ENCODE measurements at regions of chr20 and their contacts with region 1.

Region 1: DNA sequence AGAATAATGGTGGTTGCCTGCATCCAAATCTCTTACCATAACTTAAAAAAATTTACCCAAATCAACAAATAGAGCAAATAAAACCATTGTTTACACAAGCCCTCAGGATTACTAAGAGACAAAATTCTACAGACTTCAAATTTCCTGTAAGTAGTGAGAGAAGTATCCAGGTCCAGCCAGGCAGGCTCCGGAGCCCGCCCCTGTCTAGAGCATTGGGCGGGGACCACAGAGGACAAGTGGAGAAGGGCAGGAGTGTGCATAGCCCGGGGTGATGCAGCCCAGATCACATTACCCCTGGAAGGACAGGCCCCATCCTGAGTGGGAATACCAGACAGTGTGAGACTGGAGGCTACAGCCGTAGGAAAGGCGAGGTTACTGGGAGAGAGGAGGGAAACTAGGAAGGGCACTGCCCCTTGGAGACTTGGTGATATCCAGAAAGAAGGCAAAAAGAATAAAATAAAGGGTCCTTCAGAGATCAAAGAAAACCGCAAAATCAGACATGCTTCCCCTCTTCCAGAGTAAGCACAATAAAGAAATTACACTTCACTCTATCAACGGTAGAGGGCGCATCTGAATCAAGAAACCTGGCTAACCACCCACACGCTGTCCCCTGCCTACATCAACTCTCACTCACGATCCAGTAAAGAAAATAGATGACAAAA is 26.6 kb downstream of the RIN2 start:
- DNase-seq: peak; percentile 41 to 64
- ATAC-seq: peak; percentile 84 to 87
- H3K4me3 ChIP-seq: no peak overlapping the region
- H3K27ac ChIP-seq: peak overlapping the region; percentile 34 to 71 (median 62)
- H3K4me1 ChIP-seq: peaks cover 32 to 51% of the 10 kb centered on the region in 2 donors
- H3K27me3 ChIP-seq: no peaks in the 10 kb centered on the region
- CTCF ChIP-seq: peak; percentile 76 to 84 (median 80)
- POLR2A ChIP-seq: no peak

Region 2: GRCh38 chr20:19047661-19048296 is 736.9 kb before region 1 on chr20:
- in situ Hi-C with region 1: no loop called
- intact Hi-C with region 1: no loop called
- DNase-seq: peak in 1 of 2 donors; percentile 44
- ATAC-seq: peak in 1 of 2 donors; percentile 42
- H3K4me3 ChIP-seq: no peak overlapping the region
- H3K27ac ChIP-seq: no peak overlapping the region
- H3K4me1 ChIP-seq: peaks cover 6 to 15% of the 10 kb centered on the region in 2 donors
- H3K27me3 ChIP-seq: no peaks in the 10 kb centered on the region
- CTCF ChIP-seq: no peak
- POLR2A ChIP-seq: no peak

Region 3: DNA sequence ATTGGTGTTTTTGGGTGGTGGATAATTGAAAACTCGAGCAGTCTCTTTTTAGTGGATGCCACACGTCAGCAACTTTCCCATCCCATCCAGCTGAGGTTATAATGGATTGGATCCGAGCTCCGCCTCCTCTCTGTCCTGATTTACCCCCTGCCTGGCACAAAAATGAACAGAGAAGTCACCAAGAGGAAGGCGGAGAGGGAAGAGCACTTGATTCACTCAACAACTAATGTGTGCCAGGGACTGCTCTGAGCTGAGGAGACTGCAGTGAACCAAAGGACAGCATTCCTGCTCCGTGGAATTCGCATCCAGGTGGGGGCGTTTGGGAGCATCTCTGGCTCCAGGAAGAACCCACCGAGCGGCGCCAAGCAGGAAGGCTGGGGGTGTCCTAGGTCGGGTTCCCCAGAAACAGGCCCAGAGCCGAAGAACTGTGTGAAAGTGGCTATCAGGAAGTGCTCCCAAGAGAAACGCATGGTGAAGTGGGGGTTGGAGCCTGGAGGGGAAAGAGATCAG is 136.7 kb after region 1 on chr20:
- in situ Hi-C with region 1: no loop called
- intact Hi-C with region 1: loop called (anchors 5 kb)
- DNase-seq: peak; percentile 49 to 81
- ATAC-seq: peak; percentile 89 to 90
- H3K4me3 ChIP-seq: peak overlapping the region; percentile 18 to 42 (median 32)
- H3K27ac ChIP-seq: peak overlapping the region; percentile 73 to 87 (median 82)
- H3K4me1 ChIP-seq: peaks cover 56 to 67% of the 10 kb centered on the region in 2 donors
- H3K27me3 ChIP-seq: no peaks in the 10 kb centered on the region
- CTCF ChIP-seq: no peak
- POLR2A ChIP-seq: no peak

Region 4: DNA sequence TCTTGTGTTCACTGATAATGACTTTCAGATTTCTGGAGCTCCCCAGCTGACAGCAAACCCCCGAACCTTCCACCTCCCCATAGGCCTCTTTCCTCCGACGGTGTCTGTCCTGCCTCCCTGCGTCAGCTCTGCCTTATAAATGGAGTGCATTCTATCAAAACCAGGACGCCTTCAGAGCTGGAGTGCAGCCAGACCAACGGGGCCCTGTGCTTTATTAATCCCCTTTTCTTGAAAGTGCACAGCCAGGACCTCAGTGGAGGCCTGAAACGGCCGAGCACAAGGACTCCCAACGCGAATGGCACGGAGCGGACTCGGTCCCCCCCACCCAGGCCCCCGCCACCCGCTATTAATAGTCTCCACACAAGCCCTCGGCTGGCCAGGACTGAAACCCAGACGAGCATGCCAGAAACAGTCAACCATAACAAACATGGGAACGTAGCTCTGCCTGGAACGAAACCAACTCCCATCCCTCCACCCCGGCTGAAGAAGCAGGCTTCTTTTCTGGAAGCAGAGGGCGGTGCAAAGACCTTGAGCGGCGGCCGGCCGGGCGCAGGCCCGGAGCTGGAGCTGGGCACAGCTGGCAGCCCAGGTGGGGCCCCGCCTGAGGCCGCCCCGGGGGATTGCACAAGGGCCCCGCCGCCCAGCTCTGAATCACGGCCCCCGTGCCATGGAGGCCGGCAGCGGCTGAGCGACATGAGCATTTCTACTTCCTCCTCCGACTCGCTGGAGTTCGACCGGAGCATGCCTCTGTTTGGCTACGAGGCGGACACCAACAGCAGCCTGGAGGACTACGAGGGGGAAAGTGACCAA is 190.2 kb after region 1 on chr20:
- in situ Hi-C with region 1: loop called in 1 of 4 experiments (anchors 10 kb)
- intact Hi-C with region 1: loop called (anchors 1 kb)
- DNase-seq: peak; percentile 82 to 90
- ATAC-seq: peak; percentile 73 to 77
- H3K4me3 ChIP-seq: peak overlapping the region; percentile 54 to 65 (median 61)
- H3K27ac ChIP-seq: peak overlapping the region; percentile 86 to 95 (median 94)
- H3K4me1 ChIP-seq: peaks cover 62 to 63% of the 10 kb centered on the region in 2 donors
- H3K27me3 ChIP-seq: no peaks in the 10 kb centered on the region
- CTCF ChIP-seq: peak in 1 of 5 experiments; percentile 8
- POLR2A ChIP-seq: peak; percentile 19 to 62

Region 5: GRCh38 chr20:19981031-19981451 is 196.4 kb after region 1 on chr20:
- in situ Hi-C with region 1: loop called in 1 of 4 experiments (anchors 10 kb)
- intact Hi-C with region 1: no loop called
- DNase-seq: peak in 1 of 2 donors; percentile 42
- ATAC-seq: peak in 1 of 2 donors; percentile 50
- H3K4me3 ChIP-seq: no peak overlapping the region
- H3K27ac ChIP-seq: peak overlapping the region in 2 of 4 donors; percentile 21 to 43
- H3K4me1 ChIP-seq: peaks cover 81 to 89% of the 10 kb centered on the region in 2 donors
- H3K27me3 ChIP-seq: no peaks in the 10 kb centered on the region
- CTCF ChIP-seq: no peak
- POLR2A ChIP-seq: no peak

Region 6: DNA sequence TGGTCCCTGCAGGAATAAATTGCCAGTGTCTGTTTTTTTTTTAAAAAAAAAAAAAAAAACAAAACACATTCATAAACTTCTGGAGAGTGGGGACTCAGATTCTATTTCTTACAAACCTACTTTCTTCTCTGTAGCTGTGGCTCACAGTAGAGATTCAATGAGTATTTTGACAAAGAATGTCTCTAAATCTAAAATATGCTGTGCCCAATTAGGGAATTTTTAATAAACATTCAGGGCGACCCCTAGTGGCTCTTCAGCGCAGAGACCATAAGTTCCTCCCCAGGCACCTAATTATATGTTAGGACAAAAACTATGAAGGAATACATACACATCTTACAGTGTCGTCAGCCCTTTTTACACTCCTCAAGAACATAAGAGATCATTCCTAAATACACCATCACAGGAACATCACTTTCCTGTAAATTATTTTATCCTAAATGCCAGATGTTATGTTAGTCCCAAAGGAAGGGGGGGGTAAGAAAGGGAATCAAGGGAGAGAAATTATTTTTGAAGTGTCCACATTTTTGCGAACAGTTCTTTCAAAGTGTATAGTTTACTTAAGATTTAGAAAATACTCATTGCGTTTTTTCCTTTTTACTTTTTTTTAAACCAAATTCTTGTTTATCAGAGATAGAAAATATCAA is 210.7 kb after region 1 on chr20:
- in situ Hi-C with region 1: loop called in 3 of 4 experiments (anchors 5 to 10 kb)
- intact Hi-C with region 1: loop called (anchors 1 kb)
- DNase-seq: no peak
- ATAC-seq: no peak
- H3K4me3 ChIP-seq: no peak overlapping the region
- H3K27ac ChIP-seq: peak overlapping the region; percentile 78 to 91 (median 80)
- H3K4me1 ChIP-seq: peaks cover 58 to 81% of the 10 kb centered on the region in 2 donors
- H3K27me3 ChIP-seq: no peaks in the 10 kb centered on the region
- CTCF ChIP-seq: peak; percentile 71 to 85 (median 83)
- POLR2A ChIP-seq: no peak

Measured in gastrocnemius medialis (tissue), 4 donors.